Naive thymus-derived CD4-positive, alpha-beta T cell (primary cell): ENCODE measurements at regions of chr1 and their contacts with region 1.

Region 1: DNA sequence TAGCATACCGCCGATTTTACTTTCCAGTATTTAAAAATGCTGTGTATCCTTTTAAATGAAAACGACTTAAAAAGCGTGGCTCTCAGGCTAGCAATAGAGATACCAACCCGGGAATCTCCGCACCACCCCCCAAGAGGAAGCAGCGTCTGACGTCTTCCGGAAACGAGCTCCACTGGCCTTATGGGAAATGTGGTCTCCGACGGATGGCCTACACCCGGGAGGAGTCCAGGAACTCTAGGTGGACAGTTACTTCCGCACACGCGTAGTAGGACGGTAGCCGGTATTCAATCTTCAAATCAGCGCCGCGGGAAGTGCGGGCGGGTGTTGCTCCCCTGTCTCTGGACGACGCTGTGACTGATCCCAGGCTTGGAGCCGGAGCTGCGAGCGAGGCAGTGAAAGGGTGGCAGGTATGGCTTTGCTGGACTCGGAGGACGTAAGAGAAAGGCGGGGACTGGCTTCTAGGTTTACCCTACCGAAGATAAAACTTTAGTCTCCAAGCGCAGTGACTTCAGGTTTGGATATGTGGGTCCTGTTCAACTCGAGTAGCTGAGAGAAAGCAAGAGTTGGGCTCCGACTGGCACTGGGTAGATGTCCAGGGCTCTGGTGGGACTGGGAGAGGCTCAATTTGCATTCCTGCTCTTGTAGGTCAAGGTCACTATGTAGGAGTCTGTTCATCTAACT is at the start of gene ZNF684:
- DNase-seq: peak; percentile 57 to 87 (median 81)
- ATAC-seq: peak; percentile 99
- H3K4me3 ChIP-seq: peak within 1 kb of the TSS; percentile 78
- H3K4me3 Mint-ChIP-seq: peak within 1 kb of the TSS; percentile 89 to 100 (median 98)
- H3K27ac ChIP-seq: peak within 1 kb of the TSS; percentile 80
- H3K27ac Mint-ChIP-seq: peak within 1 kb of the TSS; percentile 59 to 96 (median 93)
- H3K4me1 ChIP-seq: peaks cover 14 to 17% of the 10 kb centered on the region in 2 donors
- H3K4me1 Mint-ChIP-seq: peaks cover 22 to 29% (median 25%) of the 10 kb centered on the region in 7 donors
- H3K27me3 ChIP-seq: no peaks in the 10 kb centered on the region
- H3K27me3 Mint-ChIP-seq: peaks cover 4 to 24% (median 17%) of the 10 kb centered on the region in 5 donors
- total RNA-seq, gene ZNF684: 1.3 to 6.6 (median 3.7) TPM

Region 2: DNA sequence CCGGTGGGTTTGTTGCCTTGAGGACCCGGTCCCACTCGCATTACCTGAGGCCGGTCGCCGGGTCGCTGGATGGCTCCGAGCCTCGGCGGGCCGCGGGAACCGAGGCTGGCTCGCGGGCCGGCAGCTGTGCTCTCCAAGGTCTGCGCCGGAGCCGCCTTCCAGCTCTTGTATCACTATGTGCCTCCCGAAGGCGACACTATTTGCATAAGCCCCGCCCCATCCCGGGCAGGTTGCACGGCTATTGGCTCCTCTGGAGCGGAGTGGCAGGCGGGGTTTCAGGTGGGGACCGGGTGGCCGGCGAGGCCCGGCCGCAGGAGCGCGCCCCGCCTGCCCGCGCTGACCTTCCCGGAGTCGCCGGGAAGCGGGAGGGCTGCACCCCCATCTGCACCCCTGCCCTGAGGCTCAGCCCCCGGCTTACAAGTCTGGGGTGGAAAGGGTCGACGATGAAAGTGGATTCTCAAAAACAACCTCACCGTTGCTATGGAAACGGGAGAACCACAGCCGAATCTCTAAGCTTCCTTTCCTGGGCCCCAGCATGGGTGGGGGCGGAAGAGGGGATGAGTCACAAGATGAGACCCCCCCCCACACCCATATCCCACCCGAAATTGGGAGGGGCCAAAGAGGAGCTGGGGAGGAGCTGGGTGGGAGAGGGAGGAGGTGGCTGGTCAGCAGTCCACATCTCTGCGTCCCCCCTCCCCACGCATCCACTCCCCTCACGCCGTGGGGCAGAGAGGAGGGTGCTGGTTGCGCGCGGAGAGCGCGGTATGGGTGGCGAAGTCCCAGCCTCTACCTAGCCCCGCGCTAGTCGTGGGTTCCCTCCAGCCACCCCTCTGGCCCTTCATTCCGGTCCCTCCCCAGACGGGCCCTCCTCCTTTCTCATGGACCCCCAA is 840.0 kb before region 1 on chr1 and contains the start of gene HPCAL4:
- CTCF ChIA-PET with region 1: no interaction called
- POLR2A ChIA-PET with region 1: no interaction called
- intact Hi-C with region 1: loop called in 1 of 2 experiments (anchors 5 kb)
- DNase-seq: peak; percentile 79 to 93 (median 88)
- ATAC-seq: peak; percentile 93
- H3K4me3 ChIP-seq: peak within 1 kb of the TSS; percentile 89
- H3K4me3 Mint-ChIP-seq: peak within 1 kb of the TSS; percentile 71 to 90 (median 86)
- H3K27ac ChIP-seq: peak within 1 kb of the TSS; percentile 69
- H3K27ac Mint-ChIP-seq: peak within 1 kb of the TSS; percentile 60 to 93 (median 84)
- H3K4me1 ChIP-seq: peaks cover 21 to 36% of the 10 kb centered on the region in 2 donors
- H3K4me1 Mint-ChIP-seq: peaks cover 22 to 48% (median 28%) of the 10 kb centered on the region in 7 donors
- H3K27me3 ChIP-seq: no peaks in the 10 kb centered on the region
- H3K27me3 Mint-ChIP-seq: peaks cover 0 to 63% (median 13%) of the 10 kb centered on the region in 5 donors
- total RNA-seq, gene HPCAL4: 2.9 to 49.0 (median 18.7) TPM

Region 3: GRCh38 chr1:40161125-40161887 is 370.2 kb before region 1 on chr1 and contains the start of gene RLF:
- CTCF ChIA-PET with region 1: no interaction called
- POLR2A ChIA-PET with region 1: no interaction called
- intact Hi-C with region 1: loop called (anchors 1 to 5 kb)
- DNase-seq: peak; percentile 91 to 97 (median 95)
- ATAC-seq: peak; percentile 99
- H3K4me3 ChIP-seq: peak within 1 kb of the TSS; percentile 76
- H3K4me3 Mint-ChIP-seq: no peak within 1 kb of the TSS
- H3K27ac ChIP-seq: peak within 1 kb of the TSS; percentile 88
- H3K27ac Mint-ChIP-seq: peak within 1 kb of the TSS in 2 of 9 donors; percentile 99 to 100
- H3K4me1 ChIP-seq: peaks cover 22 to 25% of the 10 kb centered on the region in 2 donors
- H3K4me1 Mint-ChIP-seq: peaks cover 5 to 19% (median 7%) of the 10 kb centered on the region in 7 donors
- H3K27me3 ChIP-seq: no peaks in the 10 kb centered on the region
- H3K27me3 Mint-ChIP-seq: no peaks in the 10 kb centered on the region
- total RNA-seq, gene RLF: 20.9 to 28.6 (median 24.7) TPM

Region 4: GRCh38 chr1:40476924-40477677 is 54.4 kb before region 1 on chr1 and contains the start of gene ZFP69:
- CTCF ChIA-PET with region 1: no interaction called
- POLR2A ChIA-PET with region 1: interaction called, 4 read pairs
- intact Hi-C with region 1: loop called in 1 of 2 experiments (anchors 1 kb)
- DNase-seq: peak; percentile 53 to 70 (median 65)
- ATAC-seq: peak; percentile 91
- H3K4me3 ChIP-seq: peak within 1 kb of the TSS; percentile 85
- H3K4me3 Mint-ChIP-seq: peak within 1 kb of the TSS; percentile 83 to 99 (median 92)
- H3K27ac ChIP-seq: peak within 1 kb of the TSS; percentile 64
- H3K27ac Mint-ChIP-seq: peak within 1 kb of the TSS; percentile 70 to 95 (median 82)
- H3K4me1 ChIP-seq: peaks cover 0 to 5% of the 10 kb centered on the region in 2 donors
- H3K4me1 Mint-ChIP-seq: peaks cover 12 to 34% (median 27%) of the 10 kb centered on the region in 7 donors
- H3K27me3 ChIP-seq: no peaks in the 10 kb centered on the region
- H3K27me3 Mint-ChIP-seq: no peaks in the 10 kb centered on the region
- total RNA-seq, gene ZFP69: 2.7 to 4.3 (median 3.4) TPM

Region 5: GRCh38 chr1:40668769-40669525 is 137.4 kb after region 1 on chr1:
- CTCF ChIA-PET with region 1: interaction called, 3 read pairs
- POLR2A ChIA-PET with region 1: interaction called, 5 read pairs
- intact Hi-C with region 1: loop called (anchors 2 to 5 kb)
- DNase-seq: peak; percentile 58 to 84 (median 73)
- ATAC-seq: peak; percentile 82
- H3K4me3 ChIP-seq: peak overlapping the region; percentile 35
- H3K4me3 Mint-ChIP-seq: peak overlapping the region in 8 of 10 donors; percentile 36 to 68 (median 54)
- H3K27ac ChIP-seq: no peak overlapping the region
- H3K27ac Mint-ChIP-seq: no peak overlapping the region
- H3K4me1 ChIP-seq: peaks cover 9 to 13% of the 10 kb centered on the region in 2 donors
- H3K4me1 Mint-ChIP-seq: peaks cover 8 to 22% (median 17%) of the 10 kb centered on the region in 7 donors
- H3K27me3 ChIP-seq: no peaks in the 10 kb centered on the region
- H3K27me3 Mint-ChIP-seq: peaks cover 0 to 16% (median 0%) of the 10 kb centered on the region in 5 donors

Region 6: DNA sequence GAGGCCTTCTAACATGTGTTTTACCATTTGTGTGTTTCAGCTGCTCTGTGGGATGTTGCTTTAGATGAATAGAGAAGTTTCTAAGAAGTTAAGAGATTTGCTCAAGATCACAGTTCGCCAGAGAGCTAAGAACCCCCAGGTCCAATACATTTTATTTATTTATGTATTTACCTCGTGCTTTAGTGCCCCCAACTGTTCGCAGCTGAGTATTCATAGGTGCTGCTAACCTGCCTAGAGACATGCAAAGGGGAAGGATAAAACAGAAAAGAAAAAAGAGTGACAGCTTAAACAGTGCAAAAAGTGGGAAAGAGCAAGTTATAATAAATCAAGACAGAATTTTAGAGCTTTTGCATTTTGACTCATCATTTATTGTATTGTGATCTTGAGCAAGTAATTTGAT is 191.1 kb after region 1 on chr1:
- CTCF ChIA-PET with region 1: no interaction called
- POLR2A ChIA-PET with region 1: no interaction called
- intact Hi-C with region 1: no loop called
- DNase-seq: no peak
- ATAC-seq: no peak
- H3K4me3 ChIP-seq: no peak overlapping the region
- H3K4me3 Mint-ChIP-seq: no peak overlapping the region
- H3K27ac ChIP-seq: no peak overlapping the region
- H3K27ac Mint-ChIP-seq: peak overlapping the region in 3 of 9 donors; percentile 13 to 48 (median 27)
- H3K4me1 ChIP-seq: no peaks in the 10 kb centered on the region
- H3K4me1 Mint-ChIP-seq: peaks cover 31 to 81% (median 63%) of the 10 kb centered on the region in 7 donors
- H3K27me3 ChIP-seq: no peaks in the 10 kb centered on the region
- H3K27me3 Mint-ChIP-seq: no peaks in the 10 kb centered on the region

Region 7: GRCh38 chr1:40802078-40802741 is 270.7 kb after region 1 on chr1:
- CTCF ChIA-PET with region 1: no interaction called
- POLR2A ChIA-PET with region 1: no interaction called
- intact Hi-C with region 1: loop called in 1 of 2 experiments (anchors 2 kb)
- DNase-seq: peak; percentile 76 to 87 (median 84)
- ATAC-seq: peak; percentile 98
- H3K4me3 ChIP-seq: peak overlapping the region; percentile 65
- H3K4me3 Mint-ChIP-seq: peak overlapping the region; percentile 70 to 89 (median 78)
- H3K27ac ChIP-seq: peak overlapping the region; percentile 77
- H3K27ac Mint-ChIP-seq: peak overlapping the region; percentile 69 to 92 (median 87)
- H3K4me1 ChIP-seq: peaks cover 16 to 21% of the 10 kb centered on the region in 2 donors
- H3K4me1 Mint-ChIP-seq: peaks cover 15 to 41% (median 31%) of the 10 kb centered on the region in 7 donors
- H3K27me3 ChIP-seq: no peaks in the 10 kb centered on the region
- H3K27me3 Mint-ChIP-seq: peaks cover 0 to 2% (median 0%) of the 10 kb centered on the region in 5 donors

Region 8: DNA sequence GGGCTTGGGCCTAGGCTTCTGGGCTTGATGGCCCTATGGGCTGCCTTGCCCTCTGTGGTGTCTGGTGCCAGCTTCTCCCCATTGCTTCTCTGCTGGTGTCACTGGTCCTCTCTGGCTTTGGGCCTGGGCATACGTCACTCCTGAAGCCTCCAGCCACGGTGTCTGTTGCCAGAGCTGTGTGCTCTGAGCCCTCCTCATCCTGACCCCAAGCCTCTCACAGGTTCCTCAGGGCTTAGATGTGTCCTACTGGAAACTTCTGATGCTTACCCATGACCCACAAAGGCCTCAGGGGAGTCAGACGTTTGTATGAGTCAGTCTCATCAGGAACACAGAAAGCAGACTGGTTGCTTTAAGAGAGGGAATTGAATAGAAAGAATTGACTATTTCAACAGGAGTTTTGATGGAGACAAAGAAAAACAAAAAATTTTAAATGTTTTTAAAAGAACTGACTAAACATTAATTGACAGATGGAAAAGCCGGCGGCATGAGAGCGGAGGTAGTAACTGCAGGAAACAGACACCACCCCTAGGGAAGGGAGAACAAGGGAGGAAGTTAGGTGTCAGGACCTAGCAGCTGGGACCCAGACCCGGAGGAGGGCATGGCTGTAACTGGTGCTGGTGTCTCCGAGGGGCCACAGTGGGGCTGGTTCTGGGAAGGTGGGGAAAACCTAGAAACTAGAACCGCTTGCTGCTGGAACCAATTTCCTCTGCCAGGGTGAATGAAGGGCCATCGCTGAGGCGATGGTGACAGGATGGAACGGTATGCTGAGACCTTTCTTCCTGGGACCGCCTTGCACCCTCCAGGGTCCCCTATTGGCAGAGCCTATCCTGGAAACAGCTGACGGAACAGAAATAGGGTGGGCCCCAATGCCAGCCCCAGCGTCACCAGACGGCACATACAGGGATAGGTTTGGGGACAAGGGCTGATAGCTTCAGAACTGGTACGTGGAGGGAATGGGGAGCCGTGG is 370.6 kb after region 1 on chr1:
- CTCF ChIA-PET with region 1: no interaction called
- POLR2A ChIA-PET with region 1: no interaction called
- intact Hi-C with region 1: no loop called
- DNase-seq: no peak
- ATAC-seq: no peak
- H3K4me3 ChIP-seq: no peak overlapping the region
- H3K4me3 Mint-ChIP-seq: no peak overlapping the region
- H3K27ac ChIP-seq: no peak overlapping the region
- H3K27ac Mint-ChIP-seq: no peak overlapping the region
- H3K4me1 ChIP-seq: no peaks in the 10 kb centered on the region
- H3K4me1 Mint-ChIP-seq: peaks cover 0 to 2% (median 0%) of the 10 kb centered on the region in 7 donors
- H3K27me3 ChIP-seq: no peaks in the 10 kb centered on the region
- H3K27me3 Mint-ChIP-seq: peaks cover 0 to 16% (median 0%) of the 10 kb centered on the region in 5 donors